T-cell (primary cell): ENCODE measurements at regions of chr6 and their contacts with region 1.

Region 1: DNA sequence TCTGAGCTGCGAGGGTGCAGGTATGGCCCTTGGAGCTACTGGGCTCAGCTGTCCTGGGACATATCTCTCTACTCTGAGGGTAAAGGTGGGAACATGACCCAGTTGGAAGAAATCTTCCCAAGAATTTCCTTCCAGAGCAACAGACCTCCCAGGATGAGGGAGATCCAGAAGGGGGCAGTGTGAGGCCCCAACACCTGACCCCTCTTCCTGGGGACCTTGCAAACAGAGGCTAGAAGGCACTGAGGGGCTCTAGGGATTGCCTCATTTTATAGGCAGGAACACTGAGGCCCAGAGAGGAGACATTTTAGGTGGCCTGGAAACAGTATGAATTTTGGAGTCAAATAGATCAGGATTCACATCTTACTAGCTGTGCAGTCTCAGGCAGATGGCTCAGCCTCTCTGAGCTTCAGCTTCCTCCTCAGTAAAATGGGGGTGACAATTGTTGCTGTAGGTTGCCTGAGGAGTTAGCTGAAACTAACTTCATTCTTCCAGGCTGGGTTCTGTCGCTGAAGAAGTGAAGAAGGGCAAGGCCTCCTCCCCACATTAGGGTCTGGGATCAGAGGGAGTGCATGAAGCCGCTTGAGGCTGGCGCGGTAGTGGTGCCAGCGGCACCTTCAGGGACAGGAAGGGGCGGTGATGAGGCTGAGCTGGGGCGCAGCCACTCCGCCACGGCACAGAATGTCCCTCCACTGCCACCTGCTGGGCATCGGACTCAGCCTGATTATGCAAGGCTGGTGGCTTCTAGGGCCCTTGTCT is 11.4 kb downstream of the KCNK17 start:
- DNase-seq: peak; percentile 57 to 90 (median 82)
- ATAC-seq: peak; percentile 88 to 99 (median 95)
- H3K4me3 ChIP-seq: peak overlapping the region; percentile 12 to 48
- H3K4me3 Mint-ChIP-seq: peak overlapping the region; percentile 36 to 65 (median 55)
- H3K27ac ChIP-seq: no peak overlapping the region
- H3K27ac Mint-ChIP-seq: no peak overlapping the region
- H3K4me1 ChIP-seq: peaks cover 0 to 9% of the 10 kb centered on the region in 2 experiments
- H3K4me1 Mint-ChIP-seq: peaks cover 4 to 9% (median 5%) of the 10 kb centered on the region in 3 donors
- H3K27me3 ChIP-seq: peaks cover 0 to 16% of the 10 kb centered on the region in 2 experiments
- H3K27me3 Mint-ChIP-seq: peaks cover 0 to 8% of the 10 kb centered on the region in 2 donors

Region 2: GRCh38 chr6:38871741-38872568 is 430.9 kb before region 1 on chr6:
- CTCF ChIA-PET with region 1: interaction called, 11 to 28 read pairs
- POLR2A ChIA-PET with region 1: interaction called, 3 read pairs
- DNase-seq: peak in 34 of 35 experiments; percentile 5 to 75 (median 36)
- ATAC-seq: peak in 1 of 4 experiments; percentile 46
- H3K4me3 ChIP-seq: no peak overlapping the region
- H3K4me3 Mint-ChIP-seq: no peak overlapping the region
- H3K27ac ChIP-seq: no peak overlapping the region
- H3K27ac Mint-ChIP-seq: no peak overlapping the region
- H3K4me1 ChIP-seq: peaks cover 9 to 13% of the 10 kb centered on the region in 2 experiments
- H3K4me1 Mint-ChIP-seq: peaks cover 15 to 37% (median 31%) of the 10 kb centered on the region in 3 donors
- H3K27me3 ChIP-seq: peaks cover 2 to 3% of the 10 kb centered on the region in 2 experiments
- H3K27me3 Mint-ChIP-seq: peaks cover 3 to 12% of the 10 kb centered on the region in 2 donors

Region 3: GRCh38 chr6:38997128-38997761 is 305.6 kb before region 1 on chr6:
- CTCF ChIA-PET with region 1: interaction called, 3 to 11 read pairs
- POLR2A ChIA-PET with region 1: no interaction called
- DNase-seq: peak in 22 of 35 experiments; percentile 2 to 44 (median 12)
- ATAC-seq: no peak
- H3K4me3 ChIP-seq: no peak overlapping the region
- H3K4me3 Mint-ChIP-seq: no peak overlapping the region
- H3K27ac ChIP-seq: no peak overlapping the region
- H3K27ac Mint-ChIP-seq: no peak overlapping the region
- H3K4me1 ChIP-seq: no peaks in the 10 kb centered on the region
- H3K4me1 Mint-ChIP-seq: no peaks in the 10 kb centered on the region
- H3K27me3 ChIP-seq: peaks cover 10 to 13% of the 10 kb centered on the region in 2 experiments
- H3K27me3 Mint-ChIP-seq: peaks cover 43 to 49% of the 10 kb centered on the region in 2 donors

Region 4: GRCh38 chr6:39166189-39166911 is 136.5 kb before region 1 on chr6:
- CTCF ChIA-PET with region 1: interaction called, 3 to 26 read pairs
- POLR2A ChIA-PET with region 1: no interaction called
- DNase-seq: peak; percentile 53 to 87 (median 74)
- ATAC-seq: peak; percentile 63 to 83 (median 78)
- H3K4me3 ChIP-seq: no peak overlapping the region
- H3K4me3 Mint-ChIP-seq: peak overlapping the region in 1 of 3 donors; percentile 45
- H3K27ac ChIP-seq: no peak overlapping the region
- H3K27ac Mint-ChIP-seq: no peak overlapping the region
- H3K4me1 ChIP-seq: peaks cover 0 to 8% of the 10 kb centered on the region in 2 experiments
- H3K4me1 Mint-ChIP-seq: peaks cover 0 to 6% (median 4%) of the 10 kb centered on the region in 3 donors
- H3K27me3 ChIP-seq: peaks cover 0 to 21% of the 10 kb centered on the region in 2 experiments
- H3K27me3 Mint-ChIP-seq: no peaks in the 10 kb centered on the region

Region 5: GRCh38 chr6:39289490-39289889 is 13.4 kb before region 1 on chr6:
- CTCF ChIA-PET with region 1: no interaction called
- POLR2A ChIA-PET with region 1: no interaction called
- DNase-seq: no peak
- ATAC-seq: no peak
- H3K4me3 ChIP-seq: no peak overlapping the region
- H3K4me3 Mint-ChIP-seq: no peak overlapping the region
- H3K27ac ChIP-seq: no peak overlapping the region
- H3K27ac Mint-ChIP-seq: no peak overlapping the region
- H3K4me1 ChIP-seq: no peaks in the 10 kb centered on the region
- H3K4me1 Mint-ChIP-seq: no peaks in the 10 kb centered on the region
- H3K27me3 ChIP-seq: peaks cover 0 to 2% of the 10 kb centered on the region in 2 experiments
- H3K27me3 Mint-ChIP-seq: peaks cover 4 to 9% of the 10 kb centered on the region in 2 donors